ENCODE measurements at regions of chr2 and their contacts with region 1.

Region 1: DNA sequence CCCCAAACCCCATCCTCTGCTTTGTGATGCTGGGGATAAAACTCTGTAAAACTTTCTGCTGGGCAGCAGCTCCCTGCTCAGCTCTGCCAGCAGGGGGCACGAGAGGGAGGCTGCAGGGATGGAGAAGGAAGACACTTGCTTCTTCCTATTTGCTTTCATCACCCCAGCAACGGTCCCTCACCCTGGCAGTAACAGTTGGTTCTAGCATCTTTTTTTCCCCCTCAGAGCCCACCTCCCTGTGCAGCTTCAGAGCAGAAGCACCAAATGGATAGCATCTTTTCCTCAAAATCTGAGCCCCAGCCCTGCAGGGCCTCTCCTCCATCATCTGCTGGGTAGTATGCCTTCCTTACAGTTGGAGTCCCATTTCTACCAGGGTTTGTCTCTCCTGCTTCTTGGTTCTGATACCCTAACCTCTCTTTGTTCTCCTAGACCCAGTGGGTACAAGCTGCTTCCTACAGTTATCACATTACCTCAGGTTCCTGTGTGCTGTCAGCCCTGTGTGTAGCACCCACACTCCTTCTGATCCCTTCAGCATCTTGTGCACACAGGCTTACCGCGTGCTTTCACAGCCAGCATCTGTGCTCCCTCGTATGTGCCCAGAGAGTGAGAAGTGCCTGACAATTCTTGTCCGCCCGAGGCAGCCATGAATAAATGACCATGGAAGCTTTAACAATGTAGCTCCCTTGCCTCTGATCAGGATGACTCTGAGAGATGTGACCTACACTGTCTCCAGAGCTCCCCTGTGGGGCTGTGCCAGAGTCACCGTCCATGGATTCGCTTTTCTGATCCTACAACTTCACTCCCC is 14.5 kb downstream of the CKAP2L start:
- DNase-seq: peak; percentile 70
- H3K4me3 Mint-ChIP-seq: no peak overlapping the region
- H3K27ac Mint-ChIP-seq: peak overlapping the region; percentile 74
- H3K4me1 Mint-ChIP-seq: peaks cover 23% of the 10 kb centered on the region
- H3K27me3 Mint-ChIP-seq: no peaks in the 10 kb centered on the region
- CTCF ChIP-seq: peak; percentile 86

Region 2: DNA sequence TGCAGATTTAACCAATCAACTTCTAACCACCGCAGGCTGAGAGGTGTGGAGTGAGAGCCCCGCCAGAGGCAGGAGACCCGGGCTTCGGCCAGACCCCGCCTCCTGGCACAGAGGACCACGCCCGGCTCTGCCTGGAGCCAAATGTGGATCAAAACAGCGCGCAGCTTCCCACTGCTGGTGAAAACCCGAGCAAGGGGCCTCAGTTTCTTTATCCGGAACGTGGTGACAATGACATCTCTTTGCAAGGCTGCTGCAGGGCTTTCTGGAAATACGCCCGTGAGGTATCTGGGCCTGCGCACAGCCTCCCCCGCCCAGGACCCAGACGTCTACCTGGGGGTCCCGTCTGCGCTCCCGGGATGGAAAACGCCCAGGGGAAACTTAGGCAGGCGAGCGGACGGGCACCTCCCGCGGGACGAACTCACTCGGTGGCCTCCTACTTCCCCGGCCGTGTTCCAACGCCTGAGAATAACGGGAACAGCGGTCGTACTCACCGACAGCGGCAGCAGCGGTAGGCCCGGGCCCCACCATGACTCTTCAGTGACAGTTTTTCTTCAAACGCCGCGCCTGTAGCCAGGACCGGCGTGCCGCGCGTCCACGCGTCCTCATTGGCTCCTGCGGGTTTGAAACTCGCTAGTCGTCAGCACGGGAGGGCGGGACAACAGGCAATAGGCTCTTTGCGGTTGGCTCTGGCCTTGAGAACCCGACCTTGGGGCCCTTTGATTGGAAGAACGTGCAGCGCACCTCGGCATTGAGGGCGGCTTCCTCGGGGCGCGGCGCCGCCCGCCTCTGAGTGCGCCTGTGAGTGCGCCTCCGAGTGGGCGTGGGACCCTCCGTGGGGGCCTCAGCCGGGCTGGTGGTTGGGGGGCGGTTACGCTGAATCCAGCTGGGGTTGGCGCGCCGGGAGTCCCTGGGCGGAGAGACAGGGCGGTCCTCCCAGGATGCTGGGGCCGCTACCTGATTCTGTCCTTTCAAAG is 14.4 kb after region 1 on chr2 and contains the start of gene CKAP2L:
- CTCF ChIA-PET with region 1: interaction called, 16 read pairs
- POLR2A ChIA-PET with region 1: interaction called, 10 read pairs
- intact Hi-C with region 1: no loop called
- DNase-seq: peak; percentile 99
- H3K4me3 Mint-ChIP-seq: peak within 1 kb of the TSS; percentile 97
- H3K27ac Mint-ChIP-seq: peak within 1 kb of the TSS; percentile 95
- H3K4me1 Mint-ChIP-seq: peaks cover 28% of the 10 kb centered on the region
- H3K27me3 Mint-ChIP-seq: no peaks in the 10 kb centered on the region
- CTCF ChIP-seq: no peak
- total RNA-seq, gene CKAP2L: 14.7 and 21.6 TPM in 2 replicates

Region 3: DNA sequence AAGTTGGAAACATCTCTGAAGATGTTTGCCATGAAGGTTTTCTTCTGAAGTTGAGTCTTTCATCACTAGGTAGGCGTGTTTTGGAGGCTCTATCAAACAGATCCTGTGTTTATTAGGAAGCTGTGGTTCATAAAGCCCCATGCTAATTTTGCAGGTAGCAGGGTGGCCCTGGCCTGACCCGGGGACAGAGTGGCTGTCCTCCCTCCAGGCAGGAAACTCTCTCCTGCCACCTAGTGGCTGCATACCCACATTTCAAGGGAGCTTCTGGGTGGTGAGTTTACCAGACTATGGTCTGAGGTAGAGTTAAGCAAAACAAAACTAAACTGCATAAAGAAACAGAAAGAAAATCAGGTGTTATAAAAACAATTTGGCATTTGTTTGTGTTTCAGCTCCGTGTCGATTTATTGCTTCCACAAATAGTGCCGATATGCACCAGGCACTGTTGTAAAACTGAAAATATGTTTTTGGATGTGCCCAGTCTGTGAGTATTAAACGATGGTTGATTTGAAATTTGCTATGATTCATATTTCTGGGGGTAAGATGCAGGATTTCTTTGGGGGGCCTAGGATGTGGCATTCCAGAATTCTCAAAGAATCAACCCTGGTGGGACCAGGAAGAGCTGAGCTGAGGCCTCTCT is 135.0 kb after region 1 on chr2:
- CTCF ChIA-PET with region 1: interaction called, 120 read pairs
- POLR2A ChIA-PET with region 1: interaction called, 3 read pairs
- intact Hi-C with region 1: loop called (anchors 1 kb)
- DNase-seq: peak; percentile 61
- H3K4me3 Mint-ChIP-seq: no peak overlapping the region
- H3K27ac Mint-ChIP-seq: no peak overlapping the region
- H3K4me1 Mint-ChIP-seq: peaks cover 19% of the 10 kb centered on the region
- H3K27me3 Mint-ChIP-seq: no peaks in the 10 kb centered on the region
- CTCF ChIP-seq: peak; percentile 96

Region 4: GRCh38 chr2:112947374-112947773 is 197.4 kb after region 1 on chr2:
- CTCF ChIA-PET with region 1: interaction called, 268 read pairs
- POLR2A ChIA-PET with region 1: interaction called, 34 read pairs
- intact Hi-C with region 1: no loop called
- DNase-seq: no peak
- H3K4me3 Mint-ChIP-seq: no peak overlapping the region
- H3K27ac Mint-ChIP-seq: no peak overlapping the region
- H3K4me1 Mint-ChIP-seq: peaks cover 5% of the 10 kb centered on the region
- H3K27me3 Mint-ChIP-seq: no peaks in the 10 kb centered on the region
- CTCF ChIP-seq: no peak

Measured in MCF 10A (cell line).